Transverse colon (tissue), 4 donors: ENCODE measurements at regions of chr14 and their contacts with region 1.

Region 1: GRCh38 chr14:59215325-59216181 is 27.1 kb downstream of the DAAM1 start:
- DNase-seq: peak; percentile 51
- H3K4me3 ChIP-seq: no peak overlapping the region
- H3K27ac ChIP-seq: peak overlapping the region in 3 of 4 donors; percentile 49 to 61 (median 60)
- H3K4me1 ChIP-seq: peaks cover 19 to 86% (median 24%) of the 10 kb centered on the region in 4 donors
- H3K27me3 ChIP-seq: no peaks in the 10 kb centered on the region
- CTCF ChIP-seq: no peak
- EP300 ChIP-seq: no peak
- POLR2A ChIP-seq: no peak

Region 2: GRCh38 chr14:59055439-59056045 is 160.0 kb before region 1 on chr14:
- in situ Hi-C with region 1: no loop called
- intact Hi-C with region 1: no loop called
- DNase-seq: peak; percentile 17
- H3K4me3 ChIP-seq: no peak overlapping the region
- H3K27ac ChIP-seq: no peak overlapping the region
- H3K4me1 ChIP-seq: no peaks in the 10 kb centered on the region
- H3K27me3 ChIP-seq: no peaks in the 10 kb centered on the region
- CTCF ChIP-seq: peak; percentile 63 to 75 (median 67)
- EP300 ChIP-seq: no peak
- POLR2A ChIP-seq: no peak

Region 3: GRCh38 chr14:59240356-59240755 is 24.8 kb after region 1 on chr14:
- in situ Hi-C with region 1: no loop called
- intact Hi-C with region 1: no loop called
- DNase-seq: no peak
- H3K4me3 ChIP-seq: no peak overlapping the region
- H3K27ac ChIP-seq: no peak overlapping the region
- H3K4me1 ChIP-seq: peaks cover 14 to 60% (median 34%) of the 10 kb centered on the region in 4 donors
- H3K27me3 ChIP-seq: no peaks in the 10 kb centered on the region
- CTCF ChIP-seq: no peak
- EP300 ChIP-seq: no peak
- POLR2A ChIP-seq: no peak

Region 4: GRCh38 chr14:59254146-59254941 is 38.8 kb after region 1 on chr14:
- in situ Hi-C with region 1: no loop called
- intact Hi-C with region 1: loop called (anchors 5 kb)
- DNase-seq: peak; percentile 62
- H3K4me3 ChIP-seq: no peak overlapping the region
- H3K27ac ChIP-seq: peak overlapping the region; percentile 67 to 85 (median 80)
- H3K4me1 ChIP-seq: peaks cover 11 to 33% (median 21%) of the 10 kb centered on the region in 4 donors
- H3K27me3 ChIP-seq: no peaks in the 10 kb centered on the region
- CTCF ChIP-seq: no peak
- EP300 ChIP-seq: no peak
- POLR2A ChIP-seq: no peak